ENCODE measurements at regions of chr18 and their contacts with region 1.

Region 1: GRCh38 chr18:70598406-70598805 is 309.6 kb downstream of the SOCS6 start:
- DNase-seq: no peak
- ATAC-seq: no peak

Region 2: GRCh38 chr18:70234663-70235459 is 363.5 kb before region 1 on chr18:
- intact Hi-C with region 1: no loop called
- DNase-seq: no peak
- ATAC-seq: peak; percentile 93

Region 3: GRCh38 chr18:70535041-70535440 is 63.4 kb before region 1 on chr18:
- intact Hi-C with region 1: loop called (anchors 2 kb)
- DNase-seq: no peak
- ATAC-seq: no peak

Region 4: GRCh38 chr18:70650878-70651277 is 52.5 kb after region 1 on chr18:
- intact Hi-C with region 1: no loop called
- DNase-seq: no peak
- ATAC-seq: no peak